ENCODE measurements at regions of chr18 and their contacts with region 1.

Region 1: GRCh38 chr18:39571511-39571910 is 2005.9 kb upstream of the CELF4 start:
- DNase-seq: no peak
- ATAC-seq: no peak

Region 2: GRCh38 chr18:37778417-37779165 is 1792.9 kb before region 1 on chr18:
- intact Hi-C with region 1: loop called in 1 of 2 experiments (anchors 10 kb)
- DNase-seq: peak; percentile 69
- ATAC-seq: peak; percentile 50 to 74

Region 3: DNA sequence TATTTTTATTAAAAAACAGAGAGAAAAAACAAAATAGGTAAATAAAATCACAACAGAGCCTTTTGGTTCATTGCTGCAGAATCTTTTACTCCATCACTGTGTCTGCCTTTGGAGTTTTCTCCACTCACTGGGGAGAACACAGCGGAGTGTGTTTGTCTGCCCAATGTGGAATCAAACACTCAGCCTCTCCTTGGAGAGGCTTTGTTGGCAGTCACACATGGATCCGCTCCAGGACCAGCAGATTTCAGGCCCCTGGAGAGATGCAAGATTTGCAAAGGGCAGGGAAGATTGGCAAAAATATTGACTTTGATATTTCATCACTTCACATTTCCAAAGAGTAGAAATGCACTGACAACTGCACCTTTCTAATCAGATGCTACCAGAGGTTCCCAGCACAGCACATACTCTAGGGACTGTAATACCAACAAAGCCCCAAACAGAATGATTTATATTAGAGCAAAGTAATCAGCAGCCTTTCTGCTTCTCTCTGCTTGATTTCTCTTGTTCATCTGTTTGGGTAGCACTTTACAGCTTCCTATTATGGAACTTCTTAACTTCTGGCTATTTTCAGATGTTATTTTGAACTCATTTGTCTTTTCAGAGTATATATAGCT is 484.7 kb after region 1 on chr18:
- intact Hi-C with region 1: no loop called
- DNase-seq: peak; percentile 18
- ATAC-seq: peak in 1 of 2 donors; percentile 74